ENCODE measurements at regions of chr5 and their contacts with region 1.

Region 1: DNA sequence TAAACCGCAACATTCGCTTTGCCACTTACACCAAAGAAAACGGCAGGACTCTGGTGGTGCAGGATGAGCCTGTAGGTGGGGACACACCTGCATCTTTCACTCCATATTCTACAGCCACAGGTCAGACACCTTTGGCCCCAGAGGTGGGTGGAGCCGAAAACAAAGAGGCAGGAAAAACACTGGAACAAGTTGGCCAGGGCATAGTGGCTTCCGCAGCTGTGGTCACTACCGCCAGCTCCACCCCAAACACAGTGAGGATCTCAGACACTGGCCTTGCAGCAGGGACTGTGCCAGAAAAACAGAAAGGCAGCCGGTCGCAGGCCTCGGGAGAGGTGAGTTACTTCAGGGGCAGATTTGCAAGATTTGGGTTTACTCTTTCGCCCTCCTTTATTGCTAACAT is 33.8 kb downstream of the KDM3B start:
- DNase-seq: no peak
- CTCF ChIP-seq: no peak

Region 2: DNA sequence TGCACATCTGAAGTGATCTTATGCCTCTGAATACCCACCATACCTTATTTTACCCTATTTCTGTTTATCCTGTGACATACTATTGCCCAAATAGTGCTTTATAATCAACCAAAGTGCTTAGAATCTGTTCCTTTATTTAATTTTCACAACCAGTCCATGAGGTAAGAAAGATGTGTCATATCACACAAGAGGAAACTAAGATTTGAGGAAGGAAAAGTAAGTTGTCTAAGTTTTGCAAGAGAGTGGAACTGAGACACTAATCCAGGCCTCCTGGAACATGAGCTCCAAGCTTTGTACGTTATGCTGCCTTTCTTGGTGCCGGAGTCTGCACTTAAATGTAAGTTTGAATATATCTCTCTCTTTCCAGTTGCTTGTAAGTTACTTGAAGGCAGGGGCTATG is 16.6 kb before region 1 on chr5:
- CTCF ChIA-PET with region 1: interaction called, 27 read pairs
- POLR2A ChIA-PET with region 1: no interaction called
- DNase-seq: no peak
- CTCF ChIP-seq: no peak

Measured in GM10248 (cell line).